MCF 10A (cell line): ENCODE measurements at regions of chr17 and their contacts with region 1.

Region 1: GRCh38 chr17:27805520-27806146 is 5.3 kb upstream of the NOS2 start:
- DNase-seq: peak; percentile 88
- H3K4me3 Mint-ChIP-seq: peak overlapping the region; percentile 68
- H3K27ac Mint-ChIP-seq: peak overlapping the region; percentile 88
- H3K4me1 Mint-ChIP-seq: peaks cover 7% of the 10 kb centered on the region
- H3K27me3 Mint-ChIP-seq: no peaks in the 10 kb centered on the region
- CTCF ChIP-seq: peak; percentile 71

Region 2: DNA sequence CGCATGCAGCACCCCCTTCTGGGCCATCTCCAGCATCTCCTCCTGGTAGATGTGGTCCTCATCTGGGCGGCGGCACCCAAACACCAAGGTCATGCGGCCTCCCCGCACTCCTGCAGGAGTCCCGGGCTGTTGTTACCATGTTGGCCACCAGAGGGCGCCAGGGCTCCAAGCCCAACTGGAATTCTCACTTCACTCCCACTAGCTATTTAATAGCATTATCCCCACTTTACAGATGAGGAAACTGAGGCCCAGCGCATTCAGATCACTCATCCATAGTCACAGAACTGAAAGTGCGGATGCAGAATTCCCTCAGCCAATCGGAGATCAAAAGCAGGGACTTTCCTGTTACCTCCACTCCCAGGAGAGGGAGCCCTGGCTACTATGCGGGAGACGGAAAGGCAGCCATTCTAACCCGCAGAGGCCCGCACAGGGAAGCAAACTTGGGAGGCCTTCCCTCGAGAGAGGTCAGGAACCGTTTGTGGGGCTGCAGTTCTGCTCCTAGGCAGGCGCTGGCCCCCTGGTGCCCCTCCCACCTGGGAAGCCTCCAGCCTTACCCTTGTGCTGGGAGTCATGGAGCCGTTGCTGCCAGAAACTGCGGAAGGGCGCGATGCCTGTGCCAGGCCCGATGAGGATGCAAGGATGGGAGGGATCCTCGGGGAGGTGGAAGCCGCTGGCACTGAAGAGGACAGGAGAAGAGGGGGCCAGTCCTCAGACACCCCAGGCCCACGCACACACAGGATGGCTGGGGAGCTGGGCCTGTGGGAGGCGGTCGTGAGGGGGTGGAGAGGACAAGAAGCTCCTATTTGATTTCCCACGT is 45.4 kb before region 1 on chr17:
- CTCF ChIA-PET with region 1: interaction called, 18 read pairs
- POLR2A ChIA-PET with region 1: no interaction called
- intact Hi-C with region 1: no loop called
- DNase-seq: peak; percentile 51
- H3K4me3 Mint-ChIP-seq: no peak overlapping the region
- H3K27ac Mint-ChIP-seq: no peak overlapping the region
- H3K4me1 Mint-ChIP-seq: no peaks in the 10 kb centered on the region
- H3K27me3 Mint-ChIP-seq: peaks cover 11% of the 10 kb centered on the region
- CTCF ChIP-seq: peak; percentile 96

Region 3: DNA sequence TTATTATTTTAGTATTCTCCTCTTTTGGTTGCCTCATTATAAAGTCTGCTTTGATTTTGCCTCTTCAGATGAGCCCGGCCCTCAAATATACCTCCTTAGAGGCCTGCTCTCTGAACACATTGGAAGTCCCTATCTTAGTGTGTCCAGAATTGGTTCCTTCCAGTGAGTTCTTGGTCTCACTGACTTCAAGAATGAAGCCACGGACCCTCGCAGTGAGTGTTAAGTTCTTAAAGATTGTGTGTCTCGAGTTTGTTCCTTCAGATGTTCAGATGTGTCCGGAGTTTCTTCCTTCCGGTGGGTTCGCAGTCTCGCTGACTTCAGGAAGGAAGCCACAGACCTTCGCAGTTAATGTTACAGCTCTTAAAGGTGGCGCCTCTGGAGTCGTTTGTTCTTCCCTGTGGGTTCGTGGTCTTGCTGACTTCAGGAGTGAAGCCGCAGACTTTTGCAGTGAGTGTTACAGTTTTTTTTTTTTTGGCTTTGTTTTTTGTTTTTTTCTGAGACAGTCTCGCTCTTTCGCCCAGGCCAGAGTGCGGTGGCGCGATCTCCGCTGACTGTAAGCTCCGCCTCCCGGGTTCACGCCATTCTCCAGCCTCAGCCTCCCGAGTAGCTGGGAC is 40.5 kb after region 1 on chr17:
- CTCF ChIA-PET with region 1: interaction called, 11 read pairs
- POLR2A ChIA-PET with region 1: interaction called, 3 read pairs
- intact Hi-C with region 1: no loop called
- DNase-seq: no peak
- H3K4me3 Mint-ChIP-seq: no peak overlapping the region
- H3K27ac Mint-ChIP-seq: no peak overlapping the region
- H3K4me1 Mint-ChIP-seq: peaks cover 2% of the 10 kb centered on the region
- H3K27me3 Mint-ChIP-seq: peaks cover 19% of the 10 kb centered on the region
- CTCF ChIP-seq: no peak

Region 4: GRCh38 chr17:27868576-27868975 is 62.9 kb after region 1 on chr17:
- CTCF ChIA-PET with region 1: interaction called, 445 read pairs
- POLR2A ChIA-PET with region 1: no interaction called
- intact Hi-C with region 1: loop called (anchors 5 kb)
- DNase-seq: no peak
- H3K4me3 Mint-ChIP-seq: no peak overlapping the region
- H3K27ac Mint-ChIP-seq: no peak overlapping the region
- H3K4me1 Mint-ChIP-seq: peaks cover 2% of the 10 kb centered on the region
- H3K27me3 Mint-ChIP-seq: peaks cover 23% of the 10 kb centered on the region
- CTCF ChIP-seq: no peak

Region 5: GRCh38 chr17:27892866-27893769 is 87.5 kb after region 1 on chr17 and contains the start of gene LYRM9:
- CTCF ChIA-PET with region 1: interaction called, 51 read pairs
- POLR2A ChIA-PET with region 1: interaction called, 3 read pairs
- intact Hi-C with region 1: no loop called
- DNase-seq: peak; percentile 81
- H3K4me3 Mint-ChIP-seq: peak within 1 kb of the TSS; percentile 70
- H3K27ac Mint-ChIP-seq: peak within 1 kb of the TSS; percentile 32
- H3K4me1 Mint-ChIP-seq: peaks cover 5% of the 10 kb centered on the region
- H3K27me3 Mint-ChIP-seq: peaks cover 28% of the 10 kb centered on the region
- CTCF ChIP-seq: peak; percentile 87
- total RNA-seq, gene LYRM9: 6.4 and 7.4 TPM in 2 replicates

Region 6: GRCh38 chr17:27915709-27916108 is 110.1 kb after region 1 on chr17:
- CTCF ChIA-PET with region 1: no interaction called
- POLR2A ChIA-PET with region 1: no interaction called
- intact Hi-C with region 1: no loop called
- DNase-seq: no peak
- H3K4me3 Mint-ChIP-seq: no peak overlapping the region
- H3K27ac Mint-ChIP-seq: no peak overlapping the region
- H3K4me1 Mint-ChIP-seq: no peaks in the 10 kb centered on the region
- H3K27me3 Mint-ChIP-seq: peaks cover 12% of the 10 kb centered on the region
- CTCF ChIP-seq: no peak